ENCODE measurements at regions of chr17 and their contacts with region 1.

Region 1: DNA sequence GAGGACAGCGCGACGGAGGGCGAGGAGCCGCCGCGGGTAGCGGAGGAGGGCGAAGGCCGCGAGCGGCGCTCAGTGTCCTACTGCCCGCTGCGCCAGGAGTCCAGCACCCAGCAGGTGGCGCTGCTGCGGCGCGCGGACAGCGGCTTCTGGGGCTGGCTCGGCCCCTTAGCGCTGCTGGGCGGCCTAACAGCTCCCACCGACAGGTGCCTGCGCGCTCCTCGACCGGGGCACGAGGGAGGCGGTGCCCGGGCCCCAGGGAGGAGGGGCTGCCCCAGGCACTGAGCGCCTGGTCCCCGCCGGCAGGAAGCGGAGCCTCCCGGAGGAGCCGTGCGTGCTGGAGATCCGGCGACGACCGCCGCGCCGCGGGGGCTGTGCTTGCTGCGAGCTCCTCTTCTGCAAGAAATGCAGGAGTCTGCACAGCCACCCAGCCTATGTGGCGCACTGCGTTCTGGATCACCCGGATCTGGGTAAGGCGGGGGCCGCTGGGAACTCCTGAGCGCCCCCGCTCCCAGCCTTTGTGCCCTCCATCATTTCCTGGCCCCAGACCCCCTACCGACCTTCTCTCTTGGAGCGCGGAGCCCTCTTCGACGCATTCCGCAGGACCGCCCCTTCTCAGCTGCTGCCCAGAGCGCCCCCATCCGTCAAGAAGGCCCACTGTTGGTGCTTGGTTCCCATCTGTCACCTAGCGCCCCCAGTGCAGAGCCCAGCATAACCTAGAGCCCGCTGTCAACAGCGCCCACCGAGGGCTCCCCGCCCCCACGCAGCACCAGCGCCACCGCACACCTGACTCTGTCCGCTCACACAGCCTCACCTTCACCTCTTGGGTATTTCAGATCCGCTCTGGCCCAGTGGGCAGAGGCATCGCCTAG is 3.7 kb downstream of the C17orf50 start:
- DNase-seq: peak; percentile 80
- H3K4me3 ChIP-seq: peak overlapping the region; percentile 36 to 39
- H3K27ac ChIP-seq: peak overlapping the region; percentile 2 to 49
- H3K4me1 ChIP-seq: peaks cover 6% of the 10 kb centered on the region
- H3K27me3 ChIP-seq: no peaks in the 10 kb centered on the region
- CTCF ChIP-seq: peak; percentile 84 to 99 (median 94)
- POLR2A ChIP-seq: peak; percentile 23

Region 2: GRCh38 chr17:35273684-35274083 is 490.7 kb before region 1 on chr17:
- intact Hi-C with region 1: no loop called
- DNase-seq: no peak
- H3K4me3 ChIP-seq: no peak overlapping the region
- H3K27ac ChIP-seq: no peak overlapping the region
- H3K4me1 ChIP-seq: no peaks in the 10 kb centered on the region
- H3K27me3 ChIP-seq: no peaks in the 10 kb centered on the region
- CTCF ChIP-seq: no peak
- POLR2A ChIP-seq: no peak

Region 3: DNA sequence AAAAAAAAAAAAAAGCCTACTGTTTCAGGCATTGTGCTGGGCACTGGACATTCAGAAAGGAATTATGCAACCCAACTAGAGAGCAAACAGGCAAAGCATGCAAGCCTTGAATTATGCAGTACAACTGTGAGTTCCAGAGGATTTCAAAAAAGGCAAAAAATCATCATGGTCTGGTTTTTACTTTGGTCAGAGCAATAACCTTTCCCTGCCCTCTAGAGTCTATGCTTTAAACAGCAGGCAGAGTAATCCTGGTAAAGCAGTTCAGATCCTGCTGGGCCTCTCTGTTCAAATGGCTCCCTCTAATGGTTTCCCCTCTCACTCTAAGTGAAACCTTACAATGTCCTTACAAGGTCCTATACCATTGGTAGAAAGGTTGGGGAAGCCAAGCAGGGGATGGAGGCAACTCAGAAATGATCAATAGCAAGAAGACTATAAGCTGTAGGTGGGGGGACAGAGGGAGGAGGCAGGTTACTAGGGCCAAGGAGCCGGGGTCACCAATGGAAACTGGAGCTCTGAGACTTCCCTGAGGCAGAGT is 40.4 kb after region 1 on chr17:
- intact Hi-C with region 1: loop called (anchors 2 kb)
- DNase-seq: peak; percentile 59
- H3K4me3 ChIP-seq: no peak overlapping the region
- H3K27ac ChIP-seq: no peak overlapping the region
- H3K4me1 ChIP-seq: peaks cover 10% of the 10 kb centered on the region
- H3K27me3 ChIP-seq: no peaks in the 10 kb centered on the region
- CTCF ChIP-seq: peak; percentile 56 to 96 (median 90)
- POLR2A ChIP-seq: no peak